Activated naive CD4-positive, alpha-beta T cell treated with anti-CD3 and anti-CD28 coated beads for 36 hours (primary cell): ENCODE measurements at regions of chr7 and their contacts with region 1.

Region 1: DNA sequence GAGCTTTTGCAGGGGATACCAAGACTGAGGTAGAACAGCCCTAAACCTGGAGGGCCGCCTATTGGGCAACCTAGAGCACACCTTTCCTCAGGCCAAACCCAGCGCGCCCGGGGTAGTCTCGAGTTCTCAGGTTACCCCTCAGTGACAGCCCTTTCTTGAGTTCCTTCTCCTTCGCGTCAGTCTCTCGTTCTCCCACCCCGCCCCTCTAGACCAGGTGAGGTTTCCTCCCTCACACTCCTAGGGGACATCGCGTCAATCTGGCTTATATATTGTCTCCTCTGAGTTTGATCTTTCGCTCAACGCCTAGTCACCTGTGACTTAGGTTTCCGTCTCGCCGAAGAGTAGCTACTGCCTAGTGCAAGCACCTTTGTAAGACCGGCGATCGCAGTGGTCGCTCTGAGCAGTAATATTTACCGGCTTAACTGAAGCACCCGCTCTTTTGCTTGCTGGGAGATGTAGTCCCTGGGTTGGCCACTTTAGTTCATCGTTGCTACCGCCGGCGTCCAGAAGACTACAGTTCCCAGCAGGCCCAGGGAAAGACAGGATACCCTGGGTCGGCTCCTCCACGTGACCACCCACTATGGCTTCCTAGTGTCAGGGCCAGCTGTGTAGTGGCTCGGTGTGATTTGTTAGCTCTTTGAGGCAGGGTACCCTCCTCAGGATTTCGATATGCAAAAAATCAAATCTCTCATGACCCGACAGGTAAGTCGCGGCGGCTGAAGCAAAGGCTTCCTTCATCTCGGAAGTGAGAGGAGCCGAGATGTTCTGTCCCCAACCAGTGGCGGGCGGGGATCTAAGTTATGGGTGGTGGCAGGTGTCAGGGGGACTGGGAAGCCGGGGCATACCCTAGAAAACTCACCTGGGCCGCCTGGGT is at the start of gene VPS50:
- DNase-seq: peak; percentile 96
- H3K4me3 Mint-ChIP-seq: peak within 1 kb of the TSS; percentile 96
- H3K27ac Mint-ChIP-seq: peak within 1 kb of the TSS; percentile 83
- H3K4me1 Mint-ChIP-seq: peaks cover 10% of the 10 kb centered on the region
- H3K27me3 Mint-ChIP-seq: no peaks in the 10 kb centered on the region
- total RNA-seq, gene VPS50: 15.0 to 15.8 TPM

Region 2: GRCh38 chr7:91940572-91941341 is 1291.3 kb before region 1 on chr7 and contains the start of gene AKAP9:
- CTCF ChIA-PET with region 1: no interaction called
- intact Hi-C with region 1: loop called (anchors 1 kb)
- DNase-seq: peak; percentile 91
- H3K4me3 Mint-ChIP-seq: peak within 1 kb of the TSS; percentile 90
- H3K27ac Mint-ChIP-seq: peak within 1 kb of the TSS; percentile 94
- H3K4me1 Mint-ChIP-seq: peaks cover 29% of the 10 kb centered on the region
- H3K27me3 Mint-ChIP-seq: no peaks in the 10 kb centered on the region
- total RNA-seq, gene AKAP9: 20.0 to 26.2 TPM

Region 3: DNA sequence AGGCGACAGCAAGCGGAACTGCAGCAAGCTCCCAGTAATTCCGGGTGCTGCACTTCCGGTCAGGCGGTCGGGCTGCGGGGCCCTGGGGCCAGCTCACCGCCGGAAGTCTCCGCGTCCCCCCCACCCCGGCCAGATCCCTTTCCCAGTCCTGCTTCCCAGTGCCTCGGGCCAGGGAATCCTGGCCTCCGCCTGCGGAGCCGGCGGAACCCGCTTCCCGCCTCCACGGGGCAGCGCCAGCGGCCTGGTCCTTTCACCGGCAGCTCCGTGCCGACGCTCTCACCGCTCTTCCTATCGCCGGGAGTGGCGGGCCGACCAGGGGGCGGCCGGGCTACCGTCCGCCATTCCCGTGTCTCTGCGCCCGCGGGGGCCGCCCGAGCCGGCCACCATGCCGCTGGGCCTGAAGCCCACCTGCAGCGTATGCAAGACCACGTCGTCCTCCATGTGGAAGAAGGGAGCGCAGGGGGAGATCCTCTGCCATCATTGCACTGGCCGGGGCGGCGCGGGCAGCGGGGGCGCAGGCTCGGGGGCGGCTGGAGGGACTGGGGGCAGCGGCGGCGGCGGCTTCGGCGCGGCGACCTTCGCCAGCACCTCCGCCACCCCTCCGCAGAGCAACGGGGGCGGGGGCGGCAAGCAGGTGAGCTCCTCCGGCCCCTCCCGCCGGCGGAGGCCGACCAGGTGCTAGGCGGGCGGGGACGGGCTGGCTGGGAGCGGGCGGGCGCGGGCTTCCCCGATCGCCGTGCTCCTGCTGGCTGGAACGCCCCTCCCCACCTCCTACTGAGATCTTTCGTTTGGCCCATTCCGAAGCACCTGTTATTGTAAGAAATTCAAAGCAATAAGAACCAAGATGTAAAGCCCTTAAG is 784.5 kb before region 1 on chr7 and contains the start of gene GATAD1:
- CTCF ChIA-PET with region 1: no interaction called
- intact Hi-C with region 1: loop called (anchors 5 kb)
- DNase-seq: peak; percentile 89
- H3K4me3 Mint-ChIP-seq: peak within 1 kb of the TSS; percentile 82
- H3K27ac Mint-ChIP-seq: peak within 1 kb of the TSS; percentile 84
- H3K4me1 Mint-ChIP-seq: peaks cover 12% of the 10 kb centered on the region
- H3K27me3 Mint-ChIP-seq: no peaks in the 10 kb centered on the region
- total RNA-seq, gene GATAD1: 27.5 to 29.6 TPM

Region 4: DNA sequence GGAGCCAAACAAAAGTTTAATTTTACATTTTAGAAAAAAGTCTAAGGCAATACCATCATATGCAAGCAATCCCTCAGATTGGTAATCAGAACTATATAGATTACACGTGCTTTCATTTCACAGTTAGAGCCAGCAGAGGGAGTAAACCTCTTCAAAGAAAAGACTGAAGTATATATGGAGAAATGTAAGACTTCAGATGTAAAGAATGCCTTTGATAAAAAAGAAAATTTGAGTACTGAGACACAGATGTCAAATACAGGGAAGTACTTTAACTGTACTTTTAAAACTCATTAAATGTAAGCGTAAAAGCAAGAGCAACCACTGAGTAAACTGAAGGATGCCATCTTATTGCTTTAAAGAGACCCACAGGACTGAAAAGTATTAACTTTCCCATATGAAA is 540.5 kb before region 1 on chr7:
- CTCF ChIA-PET with region 1: no interaction called
- intact Hi-C with region 1: loop called (anchors 2 kb)
- DNase-seq: peak; percentile 46
- H3K4me3 Mint-ChIP-seq: no peak overlapping the region
- H3K27ac Mint-ChIP-seq: peak overlapping the region; percentile 87
- H3K4me1 Mint-ChIP-seq: peaks cover 70% of the 10 kb centered on the region
- H3K27me3 Mint-ChIP-seq: no peaks in the 10 kb centered on the region

Region 5: DNA sequence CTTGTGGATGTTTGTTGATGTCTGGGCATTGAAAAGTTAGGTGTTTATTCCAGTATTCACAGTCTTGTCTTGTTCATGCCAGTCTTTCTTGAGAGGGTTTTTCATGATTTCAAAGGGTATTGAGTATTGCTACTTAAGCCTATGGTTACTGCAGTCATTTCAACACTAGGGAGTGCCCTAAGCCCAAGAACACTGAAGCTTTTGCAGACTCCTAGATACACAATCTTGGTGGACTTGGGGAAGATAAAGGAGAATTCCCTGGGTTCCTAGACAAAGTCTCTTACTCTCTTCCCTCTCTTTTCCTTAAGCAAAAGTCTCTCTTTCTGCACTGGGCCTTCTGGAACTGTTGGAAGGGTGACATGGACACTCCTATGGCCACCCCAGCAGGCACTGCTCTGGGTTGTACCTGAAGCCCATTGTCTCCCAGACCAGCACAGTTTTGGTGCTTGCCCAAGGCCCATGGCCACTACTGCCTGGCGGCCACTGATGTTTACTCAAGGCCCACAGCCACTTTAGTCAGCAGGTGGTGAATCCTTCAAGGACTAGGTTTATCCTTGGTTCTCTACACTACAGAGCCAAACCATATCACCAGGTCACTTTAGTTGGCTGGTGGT is 139.2 kb before region 1 on chr7:
- CTCF ChIA-PET with region 1: interaction called, 10 read pairs
- intact Hi-C with region 1: loop called (anchors 1 kb)
- DNase-seq: no peak
- H3K4me3 Mint-ChIP-seq: no peak overlapping the region
- H3K27ac Mint-ChIP-seq: no peak overlapping the region
- H3K4me1 Mint-ChIP-seq: no peaks in the 10 kb centered on the region
- H3K27me3 Mint-ChIP-seq: peaks cover 10% of the 10 kb centered on the region

Region 6: DNA sequence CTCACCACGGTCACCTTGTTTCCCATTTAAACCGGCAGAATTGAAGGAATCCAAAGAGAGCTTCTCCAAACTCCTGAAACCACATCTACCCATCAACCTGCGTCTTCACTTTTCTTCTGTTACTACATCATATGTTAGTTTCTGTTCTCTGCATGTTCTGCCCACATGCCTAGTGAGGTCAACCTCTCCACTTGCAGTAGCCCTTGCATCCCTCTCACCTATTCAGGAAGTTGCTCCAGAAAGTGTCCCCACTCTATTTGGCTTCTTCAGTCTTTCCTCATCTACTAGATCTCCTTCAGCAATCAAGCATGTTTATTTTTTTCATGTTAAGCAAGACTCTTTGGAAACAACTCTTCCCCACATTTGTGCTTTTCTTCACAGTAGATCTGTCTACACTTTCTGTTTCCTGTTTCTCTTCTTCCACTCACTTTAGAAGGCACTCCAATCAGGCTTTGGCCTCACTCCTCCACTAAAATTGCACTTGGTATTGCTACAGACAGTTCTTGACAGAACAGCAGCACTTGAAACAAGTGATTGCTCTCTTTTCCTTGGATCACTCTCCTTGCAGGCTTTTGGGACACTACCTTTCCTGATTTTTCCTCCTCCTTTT is 91.3 kb before region 1 on chr7:
- CTCF ChIA-PET with region 1: no interaction called
- intact Hi-C with region 1: no loop called
- DNase-seq: no peak
- H3K4me3 Mint-ChIP-seq: no peak overlapping the region
- H3K27ac Mint-ChIP-seq: no peak overlapping the region
- H3K4me1 Mint-ChIP-seq: peaks cover under 1% of the 10 kb centered on the region
- H3K27me3 Mint-ChIP-seq: no peaks in the 10 kb centered on the region

Region 7: GRCh38 chr7:93245525-93246432 is 13.7 kb after region 1 on chr7:
- CTCF ChIA-PET with region 1: interaction called, 18 read pairs
- intact Hi-C with region 1: no loop called
- DNase-seq: no peak
- H3K4me3 Mint-ChIP-seq: no peak overlapping the region
- H3K27ac Mint-ChIP-seq: no peak overlapping the region
- H3K4me1 Mint-ChIP-seq: peaks cover 6% of the 10 kb centered on the region
- H3K27me3 Mint-ChIP-seq: no peaks in the 10 kb centered on the region

Region 8: GRCh38 chr7:93298671-93299070 is 66.6 kb after region 1 on chr7:
- CTCF ChIA-PET with region 1: no interaction called
- intact Hi-C with region 1: no loop called
- DNase-seq: no peak
- H3K4me3 Mint-ChIP-seq: no peak overlapping the region
- H3K27ac Mint-ChIP-seq: no peak overlapping the region
- H3K4me1 Mint-ChIP-seq: no peaks in the 10 kb centered on the region
- H3K27me3 Mint-ChIP-seq: no peaks in the 10 kb centered on the region

Region 9: GRCh38 chr7:93890464-93891068 is 658.5 kb after region 1 on chr7 and contains the start of gene TFPI2:
- CTCF ChIA-PET with region 1: no interaction called
- intact Hi-C with region 1: no loop called
- DNase-seq: peak; percentile 44
- H3K4me3 Mint-ChIP-seq: peak within 1 kb of the TSS; percentile 16
- H3K27ac Mint-ChIP-seq: no peak within 1 kb of the TSS
- H3K4me1 Mint-ChIP-seq: peaks cover 10% of the 10 kb centered on the region
- H3K27me3 Mint-ChIP-seq: peaks cover 38% of the 10 kb centered on the region
- total RNA-seq, gene TFPI2: not detected